Activated CD8-positive, alpha-beta T cell treated with anti-CD3 and anti-CD28 coated beads, Interleukin-2, amount 10 ng/mL, durations not matched to agents 7 days and 5 days (primary cell): ENCODE measurements at regions of chr14 and their contacts with region 1.

Region 1: GRCh38 chr14:68780358-68781160 is 12.3 kb downstream of the ZFP36L1 start:
- DNase-seq: peak; percentile 73
- ATAC-seq: peak; percentile 51
- H3K4me3 Mint-ChIP-seq: peak overlapping the region; percentile 74
- H3K27ac Mint-ChIP-seq: peak overlapping the region; percentile 90
- H3K4me1 Mint-ChIP-seq: peaks cover 74% of the 10 kb centered on the region
- H3K27me3 Mint-ChIP-seq: no peaks in the 10 kb centered on the region

Region 2: GRCh38 chr14:68458840-68459469 is 321.6 kb before region 1 on chr14:
- CTCF ChIA-PET with region 1: no interaction called
- POLR2A ChIA-PET with region 1: no interaction called
- DNase-seq: no peak
- ATAC-seq: no peak
- H3K4me3 Mint-ChIP-seq: no peak overlapping the region
- H3K27ac Mint-ChIP-seq: no peak overlapping the region
- H3K4me1 Mint-ChIP-seq: no peaks in the 10 kb centered on the region
- H3K27me3 Mint-ChIP-seq: no peaks in the 10 kb centered on the region

Region 3: DNA sequence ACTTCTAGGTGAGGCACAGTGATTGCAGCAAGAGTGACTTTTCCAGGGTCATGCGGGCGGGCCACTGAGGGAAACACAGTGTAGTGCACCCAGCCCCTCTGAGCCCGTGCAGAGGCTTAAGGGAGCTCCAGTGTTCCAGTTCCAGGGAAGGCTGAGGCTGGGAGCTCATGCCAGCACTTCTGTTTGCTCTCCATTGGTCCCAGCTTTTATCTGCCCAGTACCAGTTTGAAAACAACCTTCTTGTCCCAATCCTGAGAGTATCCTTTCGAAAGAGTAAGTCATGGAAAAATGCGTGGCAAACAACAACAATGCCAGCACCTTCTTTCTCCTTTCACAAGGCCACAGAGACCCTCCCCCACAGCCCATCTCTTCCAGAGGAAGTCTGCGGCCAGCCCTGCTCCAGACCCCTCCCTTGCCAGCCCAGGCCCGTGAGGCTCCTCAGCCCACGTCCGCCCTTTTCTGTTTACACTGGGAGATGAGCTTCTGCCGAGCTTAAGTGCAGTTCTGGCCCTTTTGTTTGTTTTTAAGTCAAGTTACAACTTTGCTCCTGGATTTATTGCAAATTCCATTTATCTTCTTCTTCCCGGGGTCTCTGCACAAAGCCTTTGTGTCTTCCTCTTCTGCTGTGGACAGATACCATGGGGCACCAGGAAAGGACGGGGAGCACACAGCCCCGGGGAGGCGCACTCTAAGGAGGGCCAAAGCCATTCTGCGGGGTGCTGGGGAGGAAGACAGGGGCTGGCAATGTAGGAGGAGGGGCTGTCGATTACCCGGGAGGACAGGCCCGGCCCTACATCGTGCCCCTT is 173.3 kb before region 1 on chr14:
- CTCF ChIA-PET with region 1: no interaction called
- POLR2A ChIA-PET with region 1: no interaction called
- DNase-seq: no peak
- ATAC-seq: no peak
- H3K4me3 Mint-ChIP-seq: no peak overlapping the region
- H3K27ac Mint-ChIP-seq: peak overlapping the region; percentile 79
- H3K4me1 Mint-ChIP-seq: peaks cover 15% of the 10 kb centered on the region
- H3K27me3 Mint-ChIP-seq: no peaks in the 10 kb centered on the region

Region 4: GRCh38 chr14:68685419-68686204 is 94.9 kb before region 1 on chr14:
- CTCF ChIA-PET with region 1: interaction called, 11 read pairs
- POLR2A ChIA-PET with region 1: interaction called, 26 read pairs
- DNase-seq: peak; percentile 88
- ATAC-seq: peak; percentile 89
- H3K4me3 Mint-ChIP-seq: peak overlapping the region; percentile 22
- H3K27ac Mint-ChIP-seq: peak overlapping the region; percentile 88
- H3K4me1 Mint-ChIP-seq: peaks cover 55% of the 10 kb centered on the region
- H3K27me3 Mint-ChIP-seq: peaks cover 6% of the 10 kb centered on the region

Region 5: GRCh38 chr14:68718023-68718995 is 62.2 kb before region 1 on chr14:
- CTCF ChIA-PET with region 1: interaction called, 11 read pairs
- POLR2A ChIA-PET with region 1: no interaction called
- DNase-seq: no peak
- ATAC-seq: no peak
- H3K4me3 Mint-ChIP-seq: no peak overlapping the region
- H3K27ac Mint-ChIP-seq: no peak overlapping the region
- H3K4me1 Mint-ChIP-seq: peaks cover 32% of the 10 kb centered on the region
- H3K27me3 Mint-ChIP-seq: peaks cover 8% of the 10 kb centered on the region

Region 6: GRCh38 chr14:68795597-68796417 is 15.2 kb after region 1 on chr14:
- CTCF ChIA-PET with region 1: interaction called, 82 read pairs
- POLR2A ChIA-PET with region 1: interaction called, 115 read pairs
- DNase-seq: peak; percentile 86
- ATAC-seq: peak; percentile 50
- H3K4me3 Mint-ChIP-seq: peak overlapping the region; percentile 87
- H3K27ac Mint-ChIP-seq: peak overlapping the region; percentile 100
- H3K4me1 Mint-ChIP-seq: peaks cover 41% of the 10 kb centered on the region
- H3K27me3 Mint-ChIP-seq: no peaks in the 10 kb centered on the region

Region 7: DNA sequence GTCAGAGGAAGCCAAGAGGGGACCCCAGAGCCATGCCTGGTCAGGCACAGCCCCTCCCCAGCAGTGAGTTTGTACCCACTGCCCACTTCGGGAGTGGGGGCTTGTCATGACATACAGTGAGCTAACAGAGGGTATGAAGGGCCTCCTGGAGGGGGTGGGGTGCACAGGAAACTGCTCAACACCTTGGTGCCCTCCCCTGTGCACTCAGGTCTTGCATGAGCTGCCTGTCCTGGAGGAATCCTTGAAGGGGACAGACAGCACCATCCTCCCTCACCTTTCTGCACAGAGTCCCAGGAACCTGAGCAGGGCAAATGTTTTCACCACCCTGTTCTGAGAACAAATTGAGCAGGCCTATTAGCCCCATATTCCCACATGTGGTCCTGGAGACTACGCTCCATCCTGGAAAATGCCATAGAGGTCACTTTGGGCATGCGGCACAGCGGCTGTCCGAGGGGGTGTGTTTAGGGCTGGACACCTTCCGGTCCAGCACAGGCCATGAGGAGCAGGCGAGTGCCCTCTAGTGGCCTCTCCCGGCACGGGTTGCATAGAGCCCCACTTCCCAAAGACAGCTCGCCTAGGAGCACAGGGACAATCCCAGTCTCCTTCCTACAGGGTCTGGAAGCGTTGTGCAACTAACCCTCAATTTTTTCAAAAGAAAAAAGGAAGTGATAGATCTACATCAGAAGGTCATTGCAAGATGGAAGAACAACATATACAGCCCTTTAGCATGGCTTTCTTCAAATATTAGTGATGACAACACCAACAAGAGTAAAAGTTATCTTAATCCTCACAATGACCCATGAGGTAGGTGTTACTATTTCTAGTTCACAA is 44.2 kb after region 1 on chr14:
- CTCF ChIA-PET with region 1: interaction called, 246 read pairs
- POLR2A ChIA-PET with region 1: interaction called, 314 read pairs
- DNase-seq: no peak
- ATAC-seq: no peak
- H3K4me3 Mint-ChIP-seq: no peak overlapping the region
- H3K27ac Mint-ChIP-seq: peak overlapping the region; percentile 25
- H3K4me1 Mint-ChIP-seq: peaks cover 35% of the 10 kb centered on the region
- H3K27me3 Mint-ChIP-seq: no peaks in the 10 kb centered on the region

Region 8: DNA sequence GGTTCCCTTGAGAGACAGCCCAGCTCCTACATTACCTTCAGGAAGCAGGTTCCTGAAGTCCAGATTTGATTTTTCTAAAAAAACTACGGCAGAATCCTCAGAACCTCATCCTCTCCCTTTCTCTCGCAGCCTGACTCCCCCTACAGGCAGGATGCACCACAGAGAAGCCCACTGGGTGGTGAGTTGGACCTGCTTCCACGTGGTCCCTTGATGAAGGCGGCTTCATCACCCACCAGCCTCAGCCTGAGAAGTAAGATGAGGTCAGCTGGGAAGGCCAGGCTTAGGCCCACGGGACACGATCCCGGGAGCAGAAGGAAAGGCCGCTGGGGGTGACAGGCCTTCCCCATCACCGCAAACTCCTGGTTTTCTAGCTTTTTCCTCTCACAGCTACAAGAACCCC is 115.6 kb after region 1 on chr14:
- CTCF ChIA-PET with region 1: no interaction called
- POLR2A ChIA-PET with region 1: no interaction called
- DNase-seq: no peak
- ATAC-seq: no peak
- H3K4me3 Mint-ChIP-seq: no peak overlapping the region
- H3K27ac Mint-ChIP-seq: no peak overlapping the region
- H3K4me1 Mint-ChIP-seq: peaks cover 22% of the 10 kb centered on the region
- H3K27me3 Mint-ChIP-seq: no peaks in the 10 kb centered on the region

Region 9: DNA sequence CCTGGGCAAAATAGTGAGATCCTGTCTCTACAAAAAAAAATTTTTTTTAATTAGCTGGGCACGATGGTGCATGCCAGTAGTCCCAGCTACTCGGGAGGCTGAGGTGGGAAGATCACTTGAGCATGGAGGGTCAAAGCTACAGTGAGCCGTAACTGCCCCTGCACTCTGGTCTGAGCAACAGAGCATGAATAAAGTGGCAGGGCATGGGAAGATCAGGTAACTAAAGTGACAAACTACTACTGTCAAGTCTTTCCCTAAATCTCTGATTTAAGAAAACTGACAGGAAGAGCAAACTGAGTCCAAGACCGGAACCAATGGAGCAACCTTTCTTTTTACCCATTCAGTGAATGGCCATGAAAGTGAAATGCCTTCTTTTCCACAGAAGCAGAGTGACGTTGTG is 361.5 kb after region 1 on chr14:
- CTCF ChIA-PET with region 1: no interaction called
- POLR2A ChIA-PET with region 1: no interaction called
- DNase-seq: no peak
- ATAC-seq: no peak
- H3K4me3 Mint-ChIP-seq: no peak overlapping the region
- H3K27ac Mint-ChIP-seq: no peak overlapping the region
- H3K4me1 Mint-ChIP-seq: peaks cover 19% of the 10 kb centered on the region
- H3K27me3 Mint-ChIP-seq: no peaks in the 10 kb centered on the region